HepG2 (cell line): ENCODE measurements at regions of chr5 and their contacts with region 1.

Region 1: DNA sequence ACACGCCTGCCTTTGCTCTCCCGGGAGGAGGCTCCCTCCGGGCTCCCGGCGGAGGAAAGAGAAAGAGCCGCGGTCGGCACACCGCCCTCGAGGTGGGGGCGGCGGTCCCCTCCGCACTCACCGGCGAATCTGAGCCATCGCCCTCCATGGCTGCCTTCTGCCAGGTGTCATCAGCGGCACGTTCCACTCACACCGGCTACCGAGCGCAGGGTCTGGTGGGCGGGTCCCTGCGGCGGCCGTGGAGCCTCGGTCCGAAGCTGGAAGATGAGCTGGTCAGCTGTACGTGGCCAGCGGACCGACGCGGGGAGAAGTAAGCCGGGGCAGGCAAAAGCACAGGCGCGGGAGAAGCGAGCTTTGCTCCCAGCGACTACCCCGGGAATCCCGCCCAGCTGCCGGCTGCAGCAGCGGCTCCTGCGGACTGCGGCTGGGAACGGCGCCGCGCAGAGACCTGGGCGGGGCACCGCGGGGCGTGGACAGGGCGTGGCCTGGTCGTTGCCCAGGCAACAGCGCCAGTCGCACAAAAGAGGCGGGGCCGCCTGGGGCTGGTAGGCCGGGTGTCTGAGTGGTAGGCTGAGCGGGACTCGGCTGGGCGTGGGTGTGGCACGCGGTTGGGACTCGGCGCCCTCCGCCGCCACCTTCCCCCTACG is at the start of gene TRIM36:
- DNase-seq: peak; percentile 79
- ATAC-seq: peak; percentile 93
- H3K4me3 ChIP-seq: peak within 1 kb of the TSS; percentile 64 to 84 (median 83)
- H3K27ac ChIP-seq: no peak within 1 kb of the TSS
- H3K4me1 ChIP-seq: peaks cover 17% of the 10 kb centered on the region
- H3K27me3 ChIP-seq: peaks cover 0 to 13% of the 10 kb centered on the region in 2 experiments; a peak in 2 of 5 replicates
- CTCF ChIP-seq: peak; percentile 45
- EP300 ChIP-seq: no peak
- POLR2A ChIP-seq: peak; percentile 60 to 63; a peak in 3 of 4 replicates
- RAD21 ChIP-seq: peak; percentile 34; the same call in 1 of the 2 replicates
- total RNA-seq, gene TRIM36: 2.0 and 2.4 TPM in 2 replicates

Region 2: DNA sequence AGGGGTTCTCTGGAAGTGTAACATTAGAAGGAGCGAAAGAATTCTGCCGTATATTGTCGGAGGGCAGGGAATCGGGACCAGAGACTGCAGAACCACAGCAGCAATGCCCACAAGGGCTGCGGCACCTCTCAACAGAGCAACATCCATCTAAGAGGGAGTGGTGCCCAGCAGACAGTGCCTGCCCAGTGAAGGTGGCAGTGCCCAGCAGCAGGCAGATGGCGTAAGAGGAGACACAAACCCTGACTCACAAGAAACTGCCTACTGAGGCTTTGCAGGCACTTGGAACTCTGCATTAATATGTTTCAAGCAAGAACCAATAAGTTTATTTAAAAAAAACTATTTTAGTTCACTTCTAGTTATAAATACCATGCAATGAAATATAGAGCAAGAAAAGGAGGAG is 371.7 kb before region 1 on chr5:
- CTCF ChIA-PET with region 1: no interaction called
- POLR2A ChIA-PET with region 1: no interaction called
- in situ Hi-C with region 1: no loop called
- intact Hi-C with region 1: no loop called
- DNase-seq: no peak
- ATAC-seq: no peak
- H3K4me3 ChIP-seq: no peak overlapping the region
- H3K27ac ChIP-seq: no peak overlapping the region
- H3K4me1 ChIP-seq: no peaks in the 10 kb centered on the region
- H3K27me3 ChIP-seq: no peaks in the 10 kb centered on the region; a peak in 2 of 5 replicates
- CTCF ChIP-seq: no peak
- EP300 ChIP-seq: no peak
- POLR2A ChIP-seq: no peak
- RAD21 ChIP-seq: no peak

Region 3: GRCh38 chr5:115194676-115195075 is 25.1 kb after region 1 on chr5:
- CTCF ChIA-PET with region 1: no interaction called
- POLR2A ChIA-PET with region 1: no interaction called
- in situ Hi-C with region 1: no loop called
- intact Hi-C with region 1: loop called (anchors 2 kb)
- DNase-seq: peak; percentile 60
- ATAC-seq: peak; percentile 91
- H3K4me3 ChIP-seq: no peak overlapping the region
- H3K27ac ChIP-seq: no peak overlapping the region
- H3K4me1 ChIP-seq: peaks cover 16% of the 10 kb centered on the region
- H3K27me3 ChIP-seq: no peaks in the 10 kb centered on the region
- CTCF ChIP-seq: no peak
- EP300 ChIP-seq: no peak
- POLR2A ChIP-seq: no peak
- RAD21 ChIP-seq: no peak